Heart left ventricle (tissue), 16 donors: ENCODE measurements at regions of chr20 and their contacts with region 1.

Region 1: GRCh38 chr20:3470627-3471396 is at the start of gene ATRN:
- DNase-seq: peak; percentile 95 to 97 (median 95)
- ATAC-seq: peak; percentile 91 to 98 (median 98)
- H3K4me3 ChIP-seq: peak within 1 kb of the TSS; percentile 83 to 100 (median 98)
- H3K27ac ChIP-seq: peak within 1 kb of the TSS; percentile 48 to 93 (median 88)
- H3K4me1 ChIP-seq: peaks cover 9 to 35% (median 27%) of the 10 kb centered on the region in 12 donors
- H3K27me3 ChIP-seq: no peaks in the 10 kb centered on the region
- CTCF ChIP-seq: no peak
- POLR2A ChIP-seq: peak; percentile 6 to 86
- total RNA-seq, gene ATRN: 30.3 to 44.7 (median 36.9) TPM

Region 2: DNA sequence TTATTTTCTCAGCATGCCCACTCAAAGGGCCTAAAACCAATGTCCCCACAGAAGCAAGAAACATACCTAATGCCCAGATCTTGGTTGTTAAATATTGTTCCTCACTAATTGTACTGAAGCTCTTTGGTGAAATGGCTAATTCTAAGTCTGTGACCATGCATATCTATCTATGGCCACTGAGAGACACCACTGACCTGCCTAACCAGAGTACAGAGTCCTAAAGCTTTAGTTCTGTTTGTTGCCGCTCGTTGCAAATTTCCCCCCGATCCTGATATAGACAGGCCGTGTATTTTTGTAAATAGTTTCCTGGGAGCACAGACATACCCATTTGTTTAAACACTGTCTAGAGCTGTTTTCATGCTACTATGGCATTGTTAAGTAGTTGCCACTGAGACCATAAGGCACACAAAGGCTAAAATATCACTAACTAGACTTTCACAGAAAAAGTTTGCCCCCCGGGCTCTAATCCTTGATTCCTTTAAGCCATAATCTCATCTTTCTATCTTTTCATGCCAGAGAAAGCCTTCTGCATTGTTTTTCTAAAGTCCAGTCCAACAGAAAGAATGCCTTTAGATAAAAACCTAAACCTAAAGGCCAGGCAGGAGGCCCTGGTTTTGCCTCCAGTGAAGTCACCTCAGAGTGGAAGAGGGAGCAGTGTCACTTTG is 112.0 kb before region 1 on chr20:
- intact Hi-C with region 1: loop called in 1 of 10 experiments (anchors 10 kb)
- DNase-seq: no peak
- ATAC-seq: peak in 3 of 4 donors; percentile 37 to 72 (median 57)
- H3K4me3 ChIP-seq: no peak overlapping the region
- H3K27ac ChIP-seq: no peak overlapping the region
- H3K4me1 ChIP-seq: peaks cover 0 to 24% (median 10%) of the 10 kb centered on the region in 12 donors
- H3K27me3 ChIP-seq: no peaks in the 10 kb centered on the region
- CTCF ChIP-seq: peak in 1 of 12 donors; percentile 20
- POLR2A ChIP-seq: no peak

Region 3: GRCh38 chr20:3400260-3401155 is 70.3 kb before region 1 on chr20:
- intact Hi-C with region 1: loop called in 5 of 10 experiments (anchors 5 kb)
- DNase-seq: no peak
- ATAC-seq: peak in 3 of 4 donors; percentile 37 to 66 (median 57)
- H3K4me3 ChIP-seq: no peak overlapping the region
- H3K27ac ChIP-seq: peak overlapping the region in 10 of 12 donors; percentile 18 to 69 (median 49)
- H3K4me1 ChIP-seq: peaks cover 9 to 57% (median 47%) of the 10 kb centered on the region in 12 donors
- H3K27me3 ChIP-seq: no peaks in the 10 kb centered on the region
- CTCF ChIP-seq: no peak
- POLR2A ChIP-seq: no peak

Region 4: DNA sequence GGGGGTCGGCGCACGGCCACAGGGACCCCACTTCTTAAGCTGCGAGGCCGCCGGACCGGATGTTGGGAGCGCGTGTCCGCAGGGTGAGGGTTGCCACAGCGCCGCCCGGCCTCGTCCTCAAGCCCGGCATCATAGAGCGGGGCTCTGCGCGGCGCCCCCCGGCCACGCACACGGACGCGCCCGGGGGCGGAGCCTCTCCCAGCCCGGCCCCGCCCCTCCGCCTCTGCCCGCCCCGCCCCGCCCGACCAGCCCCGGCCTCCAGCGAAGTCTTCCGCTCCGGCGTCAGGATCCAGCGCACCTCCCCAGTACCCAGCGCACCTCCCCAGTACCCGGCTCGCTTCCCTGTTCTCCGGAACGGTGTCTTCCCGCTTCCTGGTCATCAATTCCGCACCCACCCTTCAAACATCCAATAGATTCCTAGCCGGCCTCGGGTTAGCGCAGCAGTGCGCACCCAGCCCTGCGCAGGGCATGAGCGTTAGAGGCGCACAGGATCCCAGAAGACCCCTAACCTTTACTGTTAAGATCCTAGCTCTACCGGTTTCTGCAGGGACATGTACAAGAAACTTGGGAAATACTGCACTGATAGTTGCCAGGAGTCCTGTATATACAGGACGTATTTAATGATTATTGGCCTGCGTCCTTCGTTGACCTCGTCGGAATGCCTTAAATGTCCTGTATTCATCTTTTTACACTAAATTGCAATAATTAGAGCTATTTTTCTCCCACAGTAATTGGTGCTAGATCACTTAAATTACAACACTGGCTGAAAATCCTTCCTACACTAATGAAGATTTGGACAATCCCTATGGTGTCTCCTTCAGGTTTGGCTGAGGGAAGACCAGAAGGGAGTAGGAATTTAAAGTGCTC is 62.8 kb before region 1 on chr20:
- intact Hi-C with region 1: loop called in 7 of 10 experiments (anchors 1 to 5 kb)
- DNase-seq: peak; percentile 82 to 86 (median 83)
- ATAC-seq: peak; percentile 82 to 84 (median 82)
- H3K4me3 ChIP-seq: peak overlapping the region; percentile 66 to 100 (median 90)
- H3K27ac ChIP-seq: peak overlapping the region; percentile 89 to 98 (median 96)
- H3K4me1 ChIP-seq: peaks cover 0 to 31% (median 17%) of the 10 kb centered on the region in 12 donors
- H3K27me3 ChIP-seq: no peaks in the 10 kb centered on the region
- CTCF ChIP-seq: no peak
- POLR2A ChIP-seq: peak in 1 of 2 donors; percentile 69

Region 5: GRCh38 chr20:3970016-3970415 is 499.2 kb after region 1 on chr20:
- intact Hi-C with region 1: no loop called
- DNase-seq: no peak
- ATAC-seq: peak in 3 of 4 donors; percentile 42 to 52 (median 45)
- H3K4me3 ChIP-seq: no peak overlapping the region
- H3K27ac ChIP-seq: no peak overlapping the region
- H3K4me1 ChIP-seq: peaks cover 0 to 12% (median 0%) of the 10 kb centered on the region in 12 donors
- H3K27me3 ChIP-seq: no peaks in the 10 kb centered on the region
- CTCF ChIP-seq: peak in 3 of 12 donors; percentile 5 to 29 (median 25)
- POLR2A ChIP-seq: no peak